ENCODE measurements at regions of chr4 and their contacts with region 1.

Region 1: GRCh38 chr4:127965062-127965802 is at the starts of genes ABHD18 and MFSD8:
- DNase-seq: peak; percentile 99
- H3K4me3 ChIP-seq: peak within 1 kb of the TSS; percentile 85 to 96 (median 90)
- H3K27ac ChIP-seq: peak within 1 kb of the TSS; percentile 93 to 98 (median 95)
- H3K4me1 ChIP-seq: peaks cover 11 to 33% (median 23%) of the 10 kb centered on the region in 4 donors
- H3K27me3 ChIP-seq: no peaks in the 10 kb centered on the region
- CTCF ChIP-seq: peak; percentile 36 to 54 (median 42)
- EP300 ChIP-seq: no peak
- POLR2A ChIP-seq: peak; percentile 34
- total RNA-seq, gene ABHD18: 4.7 to 10.0 (median 7.1) TPM
- total RNA-seq, gene MFSD8: 13.6 to 36.1 (median 16.3) TPM

Region 2: DNA sequence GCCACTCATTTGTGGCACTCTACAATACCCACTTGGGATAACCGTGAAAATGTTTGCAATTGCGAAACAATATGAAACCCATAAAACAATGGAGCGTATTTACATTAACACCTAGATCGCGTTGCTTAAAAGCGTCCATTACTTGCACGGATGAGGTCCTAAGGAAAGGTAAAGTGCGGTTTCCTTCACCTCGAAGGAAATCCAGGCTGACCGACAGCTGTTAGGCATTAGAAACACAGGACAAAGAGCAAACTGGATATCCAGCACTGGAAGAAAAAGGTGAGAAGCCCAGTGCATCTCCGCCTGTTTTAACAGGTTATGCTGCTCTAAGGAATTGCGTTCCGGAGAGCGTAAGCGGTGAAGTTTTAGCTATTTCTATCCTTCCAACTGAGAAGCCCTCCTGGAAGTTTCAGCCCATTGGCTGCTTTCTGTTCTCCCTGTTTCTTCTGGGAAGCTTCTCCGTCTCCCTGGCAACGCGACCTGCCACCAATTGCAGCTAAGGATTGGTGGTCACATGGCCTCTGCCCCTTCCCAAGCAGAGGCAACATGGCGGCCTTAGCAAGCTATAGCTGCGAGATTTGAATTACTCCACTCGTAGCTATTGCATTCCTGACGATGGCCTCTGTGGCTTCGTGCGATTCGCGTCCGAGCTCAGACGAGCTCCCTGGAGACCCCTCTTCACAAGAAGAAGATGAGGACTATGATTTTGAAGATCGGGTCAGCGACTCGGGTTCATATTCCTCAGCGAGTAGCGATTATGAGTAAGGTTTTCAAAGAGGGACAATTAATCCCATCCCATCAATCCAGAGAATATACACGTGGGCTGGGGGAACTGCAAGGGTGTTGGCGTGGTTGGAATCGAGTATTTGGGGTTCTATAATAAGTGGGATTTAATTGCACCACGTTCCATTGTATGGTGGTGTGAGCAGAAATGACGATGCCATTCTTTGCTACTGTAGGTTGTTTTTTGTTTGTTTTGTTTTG is 332.5 kb before region 1 on chr4 and contains the start of gene INTU:
- intact Hi-C with region 1: loop called (anchors 10 kb)
- DNase-seq: peak; percentile 98
- H3K4me3 ChIP-seq: peak within 1 kb of the TSS; percentile 64 to 77 (median 72)
- H3K27ac ChIP-seq: peak within 1 kb of the TSS; percentile 44 to 82 (median 68)
- H3K4me1 ChIP-seq: peaks cover 3 to 26% (median 12%) of the 10 kb centered on the region in 4 donors
- H3K27me3 ChIP-seq: no peaks in the 10 kb centered on the region
- CTCF ChIP-seq: no peak
- EP300 ChIP-seq: no peak
- POLR2A ChIP-seq: no peak
- total RNA-seq, gene INTU: 5.9 to 8.7 (median 7.1) TPM

Region 3: DNA sequence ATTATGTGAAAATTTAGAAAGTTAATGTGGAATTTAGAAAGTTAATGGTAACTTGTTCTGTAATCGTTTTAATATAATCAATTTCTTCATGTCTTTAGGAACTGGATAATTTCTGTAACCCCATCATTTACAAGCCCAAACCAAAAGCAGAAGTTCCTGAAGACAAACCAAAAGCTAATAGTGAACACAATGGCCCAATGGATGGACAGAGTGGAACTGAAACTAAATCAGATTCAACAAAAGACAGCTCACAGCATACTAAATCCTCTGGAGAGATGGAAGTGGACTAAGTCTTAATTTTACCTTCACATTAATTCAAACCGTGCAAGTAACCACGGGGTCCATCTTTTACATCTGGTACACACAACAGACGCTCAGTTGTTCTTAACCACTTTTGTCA is 132.6 kb before region 1 on chr4:
- intact Hi-C with region 1: no loop called
- DNase-seq: no peak
- H3K4me3 ChIP-seq: no peak overlapping the region
- H3K27ac ChIP-seq: no peak overlapping the region
- H3K4me1 ChIP-seq: no peaks in the 10 kb centered on the region
- H3K27me3 ChIP-seq: no peaks in the 10 kb centered on the region
- CTCF ChIP-seq: no peak
- EP300 ChIP-seq: no peak
- POLR2A ChIP-seq: no peak

Region 4: DNA sequence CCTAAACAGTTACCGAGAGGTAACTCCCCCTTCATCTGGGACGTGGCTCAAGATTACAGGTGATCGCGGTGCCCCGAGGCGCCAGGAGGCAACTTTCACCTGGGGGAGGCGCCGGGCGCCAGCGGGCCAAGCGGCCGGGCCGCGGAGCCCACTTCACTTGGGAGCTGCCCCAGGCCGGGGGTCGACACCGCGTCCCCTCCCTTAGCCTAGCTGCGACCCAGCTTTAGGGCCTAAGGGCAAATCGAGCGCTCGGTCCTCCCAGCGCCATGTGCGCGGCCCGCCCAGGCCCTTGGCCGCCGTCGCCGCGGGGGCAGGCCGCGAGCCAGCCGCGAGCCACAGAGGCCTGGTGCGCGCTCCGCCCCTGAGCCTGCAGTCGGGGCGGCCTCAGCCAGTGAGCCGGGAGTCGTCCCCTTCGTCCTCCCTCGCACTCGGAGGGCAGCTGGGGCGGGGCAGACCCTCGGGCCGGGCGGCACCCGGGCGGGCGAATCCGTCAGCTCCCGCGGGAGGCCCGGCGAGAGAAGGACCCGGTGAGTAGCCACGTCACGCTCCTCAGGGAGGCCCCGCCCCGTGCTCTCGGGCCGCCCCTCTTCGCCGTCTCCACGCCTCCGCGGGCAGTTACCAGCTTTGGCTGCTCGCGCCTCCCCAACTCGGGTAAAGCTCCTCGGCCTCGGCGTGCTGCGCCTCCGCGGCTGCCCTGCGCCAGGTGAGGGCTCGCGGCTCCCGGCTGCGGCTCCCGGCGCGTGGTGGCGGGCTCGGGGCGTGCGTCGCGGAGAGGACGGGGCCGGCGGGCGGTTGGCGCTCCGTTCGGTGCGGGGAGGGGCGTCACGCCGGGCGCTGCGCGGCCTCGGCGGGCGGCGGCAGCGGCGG is 95.7 kb after region 1 on chr4 and contains the start of gene LARP1B:
- intact Hi-C with region 1: loop called (anchors 1 kb)
- DNase-seq: peak; percentile 97
- H3K4me3 ChIP-seq: peak within 1 kb of the TSS; percentile 86 to 97 (median 91)
- H3K27ac ChIP-seq: peak within 1 kb of the TSS; percentile 96 to 98 (median 98)
- H3K4me1 ChIP-seq: peaks cover 9 to 19% (median 13%) of the 10 kb centered on the region in 4 donors
- H3K27me3 ChIP-seq: no peaks in the 10 kb centered on the region
- CTCF ChIP-seq: no peak
- EP300 ChIP-seq: no peak
- POLR2A ChIP-seq: peak; percentile 59
- total RNA-seq, gene LARP1B: 18.9 to 27.5 (median 24.1) TPM

Region 5: DNA sequence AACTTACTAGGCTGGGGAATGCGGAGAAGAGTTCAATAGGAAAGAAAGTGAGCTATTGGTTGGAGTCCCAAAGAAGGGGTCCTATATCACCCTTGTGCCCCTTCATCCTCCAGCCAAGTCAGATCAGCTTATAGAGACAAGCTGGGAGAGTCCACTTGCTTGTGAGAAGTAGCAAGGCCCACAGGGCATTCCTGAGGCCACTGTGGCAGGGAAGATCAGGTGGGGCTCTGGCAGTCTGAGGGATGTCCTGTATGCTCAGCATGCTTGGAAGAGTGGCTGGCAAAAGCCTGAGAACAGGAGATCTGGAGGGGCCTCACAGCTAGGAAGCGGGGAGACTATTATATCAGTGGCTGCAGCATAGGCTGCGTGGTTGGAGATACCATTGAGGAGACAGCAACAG is 275.2 kb after region 1 on chr4:
- intact Hi-C with region 1: no loop called
- DNase-seq: no peak
- H3K4me3 ChIP-seq: no peak overlapping the region
- H3K27ac ChIP-seq: no peak overlapping the region
- H3K4me1 ChIP-seq: no peaks in the 10 kb centered on the region
- H3K27me3 ChIP-seq: no peaks in the 10 kb centered on the region
- CTCF ChIP-seq: no peak
- EP300 ChIP-seq: no peak
- POLR2A ChIP-seq: no peak